Mammary epithelial cell (primary cell): ENCODE measurements at regions of chr10 and their contacts with region 1.

Region 1: DNA sequence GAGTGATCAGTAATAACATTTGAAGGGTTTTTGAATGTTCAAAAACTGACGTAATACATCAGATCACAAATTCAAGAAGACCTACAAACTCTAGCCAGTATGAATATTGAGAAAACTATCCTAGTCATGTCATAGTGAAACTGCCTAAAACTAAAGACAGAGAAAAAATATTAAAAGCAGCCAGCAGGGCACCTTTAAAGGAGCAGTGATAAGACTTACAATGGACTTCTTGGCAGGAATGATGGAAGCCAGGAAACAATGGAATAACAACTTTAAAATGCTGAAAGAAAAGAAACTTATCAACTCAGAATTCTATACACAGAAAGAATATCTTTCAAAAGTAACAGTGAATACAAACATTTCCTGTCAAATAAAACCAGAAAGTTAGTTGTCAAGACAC is 78.3 kb upstream of the CTBP2 start:
- DNase-seq: no peak
- H3K4me3 ChIP-seq: no peak overlapping the region
- H3K27ac ChIP-seq: no peak overlapping the region
- H3K4me1 ChIP-seq: peaks cover 15% of the 10 kb centered on the region
- H3K27me3 ChIP-seq: no peaks in the 10 kb centered on the region
- CTCF ChIP-seq: peak in 1 of 2 donors; percentile 16

Region 2: DNA sequence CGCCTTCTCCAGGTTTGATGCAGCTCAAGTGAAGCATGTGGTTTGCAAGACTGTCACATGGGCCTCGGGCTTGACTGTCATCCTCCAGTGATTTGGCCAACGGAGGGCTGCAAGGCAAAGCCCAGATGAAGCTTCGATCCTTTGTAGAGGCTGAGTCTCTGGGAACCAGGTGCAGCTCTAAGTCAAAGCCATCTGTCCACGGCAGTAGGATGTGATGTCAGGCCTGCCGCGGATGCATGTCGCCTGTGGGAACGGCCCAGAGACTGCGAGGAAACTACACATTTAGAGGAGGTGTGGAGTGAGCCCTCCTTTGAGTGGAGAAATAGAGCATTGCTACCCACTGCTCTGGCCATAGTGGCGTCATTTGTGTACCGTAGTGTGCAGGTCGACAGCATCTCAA is 42.8 kb before region 1 on chr10:
- CTCF ChIA-PET with region 1: no interaction called
- dilution Hi-C with region 1: loop called (anchors 5 kb)
- in situ Hi-C with region 1: no loop called
- intact Hi-C with region 1: no loop called
- DNase-seq: no peak
- H3K4me3 ChIP-seq: no peak overlapping the region
- H3K27ac ChIP-seq: no peak overlapping the region
- H3K4me1 ChIP-seq: peaks cover 9% of the 10 kb centered on the region
- H3K27me3 ChIP-seq: no peaks in the 10 kb centered on the region
- CTCF ChIP-seq: no peak